ENCODE measurements at regions of chrX and their contacts with region 1.

Region 1: DNA sequence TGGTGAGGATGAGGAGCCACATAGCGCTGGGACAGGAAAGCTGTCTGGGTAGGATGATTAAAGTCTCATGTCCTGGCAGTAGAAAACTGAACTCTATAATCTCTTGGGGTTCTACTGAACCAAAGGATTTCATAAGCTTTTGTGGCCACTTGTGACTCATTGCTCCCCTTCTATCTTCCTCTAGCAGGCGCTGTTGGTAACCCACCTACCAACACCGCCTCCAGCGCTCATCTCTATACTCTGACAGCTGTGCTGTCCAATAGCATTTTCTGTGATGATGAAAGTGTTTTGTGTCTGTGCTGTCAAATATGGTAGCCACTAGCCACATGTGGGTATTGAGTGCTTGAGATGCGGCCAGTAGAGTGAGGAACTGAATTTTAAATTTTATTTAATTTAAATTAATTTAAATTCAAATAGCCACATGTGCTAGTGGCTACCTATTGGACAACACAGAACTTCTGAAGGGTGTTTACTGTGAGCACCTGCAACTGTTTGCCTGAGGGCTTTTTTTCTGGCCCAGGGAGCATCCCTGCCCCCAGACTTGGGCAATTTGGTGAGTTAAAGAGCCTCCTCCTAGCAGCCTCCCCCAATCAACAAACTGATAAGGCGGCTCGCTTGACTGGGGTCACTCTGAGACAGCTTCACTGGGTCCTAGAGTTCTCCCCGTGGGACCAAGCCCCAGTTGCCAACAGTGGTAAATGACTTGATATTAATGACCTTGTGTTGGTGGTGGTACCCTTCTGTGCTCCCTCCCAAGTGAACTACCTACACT is 169.2 kb upstream of the ATP6AP2 start:
- DNase-seq: no peak
- H3K4me3 ChIP-seq: no peak overlapping the region
- H3K27ac ChIP-seq: no peak overlapping the region
- H3K4me1 ChIP-seq: no peaks in the 10 kb centered on the region; a peak in 1 of 7 replicates
- H3K27me3 ChIP-seq: no peaks in the 10 kb centered on the region
- CTCF ChIP-seq: peak; percentile 36 to 74 (median 60)
- EP300 ChIP-seq: no peak
- POLR2A ChIP-seq: no peak
- RAD21 ChIP-seq: peak; percentile 31 to 55; a peak in 3 of 4 replicates

Region 2: GRCh38 chrX:40340116-40340515 is 71.4 kb before region 1 on chrX:
- CTCF ChIA-PET with region 1: no interaction called
- POLR2A ChIA-PET with region 1: no interaction called
- DNase-seq: no peak
- H3K4me3 ChIP-seq: no peak overlapping the region
- H3K27ac ChIP-seq: no peak overlapping the region
- H3K4me1 ChIP-seq: no peaks in the 10 kb centered on the region
- H3K27me3 ChIP-seq: no peaks in the 10 kb centered on the region
- CTCF ChIP-seq: no peak
- EP300 ChIP-seq: no peak
- POLR2A ChIP-seq: no peak
- RAD21 ChIP-seq: no peak

Region 3: GRCh38 chrX:40392599-40392998 is 18.9 kb before region 1 on chrX:
- CTCF ChIA-PET with region 1: interaction called, 10 read pairs
- POLR2A ChIA-PET with region 1: no interaction called
- DNase-seq: no peak
- H3K4me3 ChIP-seq: no peak overlapping the region
- H3K27ac ChIP-seq: no peak overlapping the region
- H3K4me1 ChIP-seq: no peaks in the 10 kb centered on the region
- H3K27me3 ChIP-seq: no peaks in the 10 kb centered on the region
- CTCF ChIP-seq: no peak
- EP300 ChIP-seq: no peak
- POLR2A ChIP-seq: no peak
- RAD21 ChIP-seq: no peak